ENCODE measurements at regions of chr14 and their contacts with region 1.

Region 1: DNA sequence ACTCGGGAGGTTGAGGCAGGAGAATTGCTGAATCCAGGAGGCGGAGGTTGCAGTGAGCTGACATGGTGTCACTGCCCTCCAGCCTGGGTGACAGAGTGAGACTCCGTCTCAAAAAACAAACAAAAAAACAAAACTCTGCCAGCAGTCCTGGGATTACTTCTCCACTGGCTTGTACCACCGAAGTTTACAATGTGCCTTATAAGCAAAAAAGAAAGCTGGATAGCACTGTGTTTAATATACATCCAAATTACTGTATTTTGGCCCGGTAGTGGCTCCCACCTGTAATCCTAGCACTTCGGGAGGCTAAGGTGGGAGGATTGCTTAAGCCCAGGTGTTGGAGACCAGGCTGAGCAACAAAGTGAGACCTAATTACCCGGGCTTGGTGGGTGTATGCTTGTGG is 16.7 kb downstream of the HOMEZ start:
- DNase-seq: no peak
- ATAC-seq: no peak
- H3K4me3 ChIP-seq: no peak overlapping the region
- H3K27ac ChIP-seq: no peak overlapping the region
- H3K4me1 ChIP-seq: no peaks in the 10 kb centered on the region
- H3K27me3 ChIP-seq: no peaks in the 10 kb centered on the region
- CTCF ChIP-seq: no peak
- POLR2A ChIP-seq: no peak

Region 2: GRCh38 chr14:23141671-23142451 is 127.3 kb before region 1 on chr14:
- intact Hi-C with region 1: no loop called
- DNase-seq: peak; percentile 75 to 88 (median 80)
- ATAC-seq: peak; percentile 85 to 95 (median 90)
- H3K4me3 ChIP-seq: no peak overlapping the region
- H3K27ac ChIP-seq: peak overlapping the region; percentile 46 to 84 (median 72)
- H3K4me1 ChIP-seq: peaks cover 0 to 46% (median 15%) of the 10 kb centered on the region in 12 donors
- H3K27me3 ChIP-seq: no peaks in the 10 kb centered on the region
- CTCF ChIP-seq: no peak
- POLR2A ChIP-seq: no peak

Region 3: GRCh38 chr14:23370221-23370620 is 101.0 kb after region 1 on chr14:
- intact Hi-C with region 1: loop called in 7 of 10 experiments (anchors 5 to 10 kb)
- DNase-seq: no peak
- ATAC-seq: no peak
- H3K4me3 ChIP-seq: no peak overlapping the region
- H3K27ac ChIP-seq: no peak overlapping the region
- H3K4me1 ChIP-seq: peaks cover 0 to 15% (median 3%) of the 10 kb centered on the region in 12 donors
- H3K27me3 ChIP-seq: peaks cover 0 to 19% (median 0%) of the 10 kb centered on the region in 9 donors
- CTCF ChIP-seq: no peak
- POLR2A ChIP-seq: no peak

Region 4: DNA sequence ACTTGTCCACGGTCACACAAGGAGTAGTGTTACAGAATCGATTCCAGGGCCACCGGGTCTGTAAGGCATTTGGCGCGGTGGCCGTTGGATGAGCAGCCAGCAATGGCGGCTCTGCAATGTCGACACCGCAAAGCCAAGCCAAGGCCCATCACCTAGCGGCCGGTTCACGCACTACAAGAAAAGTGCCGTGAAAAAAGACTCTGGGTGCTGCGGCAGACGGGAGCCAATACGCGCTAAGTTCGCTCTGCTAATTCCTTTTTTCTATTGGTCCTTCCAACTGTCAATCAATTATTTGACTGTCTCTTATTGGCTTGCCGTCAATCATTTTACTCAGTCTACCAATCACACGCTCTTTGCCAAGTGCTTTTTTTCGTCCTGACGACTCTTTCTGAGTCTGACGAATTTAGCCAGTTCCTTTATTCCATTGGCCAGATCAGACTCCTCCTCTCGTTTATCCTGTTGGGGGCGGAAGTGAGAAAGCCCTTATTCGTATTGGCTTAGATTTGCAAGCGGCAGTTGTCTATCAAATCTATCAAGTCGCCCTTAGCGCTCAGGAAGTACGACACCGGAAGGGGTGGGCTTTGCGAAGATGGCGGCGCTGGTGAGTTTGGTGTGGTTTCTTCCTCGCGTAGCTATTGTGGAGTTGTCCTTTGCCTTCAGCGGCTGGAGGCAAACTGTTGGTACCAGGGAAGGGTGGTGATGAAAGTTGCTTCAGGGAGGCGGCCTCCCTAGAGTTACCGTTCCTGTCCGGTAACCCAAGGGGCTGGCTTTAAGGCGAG is 200.1 kb after region 1 on chr14 and contains the start of gene NGDN:
- intact Hi-C with region 1: loop called in 1 of 10 experiments (anchors 10 kb)
- DNase-seq: peak; percentile 94 to 96 (median 95)
- ATAC-seq: peak; percentile 95 to 97 (median 96)
- H3K4me3 ChIP-seq: peak within 1 kb of the TSS; percentile 71 to 99 (median 84)
- H3K27ac ChIP-seq: peak within 1 kb of the TSS; percentile 51 to 90 (median 80)
- H3K4me1 ChIP-seq: peaks cover 0 to 15% (median 7%) of the 10 kb centered on the region in 12 donors
- H3K27me3 ChIP-seq: no peaks in the 10 kb centered on the region
- CTCF ChIP-seq: peak; percentile 73 to 96 (median 90)
- POLR2A ChIP-seq: peak in 1 of 2 donors; percentile 46
- total RNA-seq, gene NGDN: 16.5 to 23.4 (median 18.7) TPM

Region 5: DNA sequence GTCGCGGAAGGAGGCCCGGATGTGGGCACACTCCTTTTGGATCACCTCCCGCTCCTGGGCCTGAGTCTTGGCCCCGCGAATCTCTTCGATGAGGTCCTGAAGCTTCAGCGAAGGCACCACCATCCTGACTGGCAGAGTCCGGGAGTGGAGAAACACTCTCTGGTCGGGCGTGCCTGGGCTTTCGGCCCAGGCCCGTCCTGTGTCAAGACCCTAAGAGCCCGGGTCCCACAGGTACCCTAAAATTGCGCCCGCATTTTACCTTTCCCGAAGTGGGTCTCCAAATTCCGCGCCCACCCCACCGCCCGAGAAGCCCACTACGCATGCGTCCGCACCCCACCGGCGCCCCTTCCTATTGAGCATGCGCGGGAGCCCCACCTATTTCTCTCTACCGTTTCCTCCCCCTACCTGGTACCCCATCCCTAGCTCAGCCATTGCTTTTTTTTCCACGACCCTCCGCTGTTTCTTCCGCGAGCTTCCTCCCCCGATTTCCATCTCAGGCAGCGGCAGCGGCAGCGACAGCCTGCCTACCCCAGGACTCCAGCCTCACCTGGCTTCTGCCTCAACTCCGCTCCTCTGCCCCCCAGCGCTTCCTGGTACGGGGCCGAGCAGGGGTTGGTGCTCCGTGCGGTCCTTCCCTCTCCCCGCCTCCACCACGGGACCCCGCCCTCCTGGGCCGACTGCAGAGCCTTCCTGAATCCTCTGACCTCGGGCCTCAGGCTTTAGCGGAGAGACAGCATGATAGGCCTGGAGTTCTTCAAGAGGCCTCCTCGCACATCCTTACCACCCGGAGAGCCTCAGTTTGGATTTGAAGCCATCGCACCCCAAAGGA is 298.2 kb after region 1 on chr14 and contains the start of gene AP1G2:
- intact Hi-C with region 1: loop called in 1 of 10 experiments (anchors 10 kb)
- DNase-seq: peak; percentile 84 to 92 (median 88)
- ATAC-seq: peak; percentile 55 to 82 (median 72)
- H3K4me3 ChIP-seq: peak within 1 kb of the TSS; percentile 19 to 80 (median 66)
- H3K27ac ChIP-seq: peak within 1 kb of the TSS in 11 of 12 donors; percentile 38 to 77 (median 64)
- H3K4me1 ChIP-seq: peaks cover 0 to 40% (median 10%) of the 10 kb centered on the region in 12 donors
- H3K27me3 ChIP-seq: peaks cover 0 to 11% (median 0%) of the 10 kb centered on the region in 9 donors
- CTCF ChIP-seq: no peak
- POLR2A ChIP-seq: peak in 1 of 2 donors; percentile 39
- total RNA-seq, gene AP1G2: 7.2 to 33.8 (median 11.6) TPM

Region 6: GRCh38 chr14:23578560-23579310 is 309.5 kb after region 1 on chr14 and contains the start of gene JPH4:
- intact Hi-C with region 1: no loop called
- DNase-seq: no peak
- ATAC-seq: peak in 1 of 4 donors; percentile 25
- H3K4me3 ChIP-seq: no peak within 1 kb of the TSS
- H3K27ac ChIP-seq: no peak within 1 kb of the TSS
- H3K4me1 ChIP-seq: peaks cover 0 to 19% (median 7%) of the 10 kb centered on the region in 12 donors
- H3K27me3 ChIP-seq: peaks cover 27 to 76% (median 43%) of the 10 kb centered on the region in 9 donors
- CTCF ChIP-seq: no peak
- POLR2A ChIP-seq: no peak
- total RNA-seq, gene JPH4: 0.10 to 0.59 (median 0.26) TPM in 8 of 9 donors, not detected in the other